ENCODE measurements at regions of chr21 and their contacts with region 1.

Region 1: GRCh38 chr21:46144464-46145070 is 10.8 kb downstream of the FTCD start:
- DNase-seq: no peak
- ATAC-seq: no peak
- H3K4me3 ChIP-seq: no peak overlapping the region
- H3K27ac ChIP-seq: no peak overlapping the region
- H3K4me1 ChIP-seq: peaks cover 5% of the 10 kb centered on the region; the same call in 1 of the 2 replicates
- H3K27me3 ChIP-seq: no peaks in the 10 kb centered on the region
- CTCF ChIP-seq: no peak

Region 2: GRCh38 chr21:45643021-45643980 is 501.3 kb before region 1 on chr21 and contains the start of gene PCBP3:
- CTCF ChIA-PET with region 1: no interaction called
- POLR2A ChIA-PET with region 1: no interaction called
- intact Hi-C with region 1: no loop called
- DNase-seq: peak; percentile 96
- ATAC-seq: peak; percentile 80
- H3K4me3 ChIP-seq: peak within 1 kb of the TSS; percentile 66
- H3K27ac ChIP-seq: no peak within 1 kb of the TSS
- H3K4me1 ChIP-seq: peaks cover 9% of the 10 kb centered on the region
- H3K27me3 ChIP-seq: no peaks in the 10 kb centered on the region
- CTCF ChIP-seq: no peak
- total RNA-seq, gene PCBP3: 2.4 and 3.0 TPM in 2 replicates

Region 3: DNA sequence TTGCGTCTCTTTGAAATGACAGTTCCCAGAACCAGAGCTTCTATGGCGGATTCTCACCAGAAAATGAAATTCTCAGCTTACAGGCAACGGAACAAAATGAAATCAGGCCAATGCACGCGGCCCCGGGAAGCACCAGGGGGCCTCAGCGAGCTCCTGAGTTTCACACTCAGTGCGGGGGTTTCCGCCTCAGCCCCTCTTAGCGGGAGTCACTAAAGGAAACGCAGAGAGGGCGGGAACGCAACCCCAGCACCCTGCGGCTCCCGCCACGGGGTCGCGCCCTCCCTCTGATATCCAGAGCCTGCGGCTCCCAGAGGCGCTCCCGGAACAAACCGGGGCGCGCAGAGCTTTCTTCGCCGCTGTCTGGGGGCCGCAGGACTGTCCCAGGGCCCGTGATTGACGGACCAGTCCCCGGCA is 170.9 kb before region 1 on chr21:
- CTCF ChIA-PET with region 1: interaction called, 22 read pairs
- POLR2A ChIA-PET with region 1: no interaction called
- intact Hi-C with region 1: loop called (anchors 5 kb)
- DNase-seq: peak; percentile 86
- ATAC-seq: peak; percentile 25
- H3K4me3 ChIP-seq: peak overlapping the region; percentile 64
- H3K27ac ChIP-seq: peak overlapping the region; percentile 93
- H3K4me1 ChIP-seq: peaks cover 34% of the 10 kb centered on the region
- H3K27me3 ChIP-seq: no peaks in the 10 kb centered on the region
- CTCF ChIP-seq: peak; percentile 88

Region 4: DNA sequence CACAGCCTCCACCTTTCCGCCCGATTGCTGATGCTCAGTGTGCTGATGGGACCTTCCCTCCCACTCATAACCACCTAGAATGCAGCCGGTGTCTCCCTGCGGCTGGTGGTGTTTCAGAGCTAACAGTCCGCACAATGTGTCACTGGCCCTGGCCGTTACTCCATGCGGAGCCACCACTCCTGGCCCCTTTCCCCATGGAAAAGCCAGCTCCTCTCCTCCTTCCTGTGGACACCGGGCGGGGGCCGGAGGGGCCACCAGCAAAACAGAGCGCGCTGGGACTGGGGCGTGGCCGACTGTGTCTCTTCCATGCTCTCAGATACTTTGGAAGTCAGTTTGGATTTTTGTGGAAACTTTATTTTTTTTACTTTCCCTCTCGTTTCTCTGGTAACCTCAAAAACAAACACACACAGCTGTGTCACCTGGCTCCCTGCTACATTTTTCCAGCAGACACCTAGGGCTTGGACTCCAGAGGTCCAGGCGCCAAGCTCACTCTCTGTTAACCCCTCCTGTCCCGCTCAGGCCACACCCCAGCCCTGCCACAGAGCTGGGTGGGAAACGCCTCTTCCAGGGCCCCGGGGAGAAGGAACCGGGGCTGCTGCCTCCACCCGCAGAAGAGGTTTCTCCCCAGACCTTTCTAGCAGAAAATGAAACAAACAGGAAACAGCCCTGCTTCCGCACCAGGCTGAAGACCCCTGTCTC is 79.2 kb before region 1 on chr21:
- CTCF ChIA-PET with region 1: no interaction called
- POLR2A ChIA-PET with region 1: no interaction called
- intact Hi-C with region 1: no loop called
- DNase-seq: peak; percentile 34
- ATAC-seq: peak; percentile 54
- H3K4me3 ChIP-seq: peak overlapping the region; percentile 25; the same call in 1 of the 2 replicates
- H3K27ac ChIP-seq: peak overlapping the region; percentile 77
- H3K4me1 ChIP-seq: peaks cover 28% of the 10 kb centered on the region
- H3K27me3 ChIP-seq: no peaks in the 10 kb centered on the region
- CTCF ChIP-seq: no peak

Region 5: GRCh38 chr21:46184625-46185555 is 40.3 kb after region 1 on chr21:
- CTCF ChIA-PET with region 1: no interaction called
- POLR2A ChIA-PET with region 1: no interaction called
- intact Hi-C with region 1: loop called (anchors 2 kb)
- DNase-seq: peak; percentile 65
- ATAC-seq: peak; percentile 75
- H3K4me3 ChIP-seq: peak overlapping the region; percentile 96
- H3K27ac ChIP-seq: peak overlapping the region; percentile 34
- H3K4me1 ChIP-seq: peaks cover 30% of the 10 kb centered on the region
- H3K27me3 ChIP-seq: no peaks in the 10 kb centered on the region
- CTCF ChIP-seq: no peak

Region 6: GRCh38 chr21:46285761-46286496 is 141.4 kb after region 1 on chr21 and contains the start of gene YBEY:
- CTCF ChIA-PET with region 1: interaction called, 3 read pairs
- POLR2A ChIA-PET with region 1: no interaction called
- intact Hi-C with region 1: loop called (anchors 5 kb)
- DNase-seq: peak; percentile 92
- ATAC-seq: peak; percentile 90
- H3K4me3 ChIP-seq: peak within 1 kb of the TSS; percentile 75
- H3K27ac ChIP-seq: peak within 1 kb of the TSS; percentile 84
- H3K4me1 ChIP-seq: peaks cover 30% of the 10 kb centered on the region
- H3K27me3 ChIP-seq: no peaks in the 10 kb centered on the region
- CTCF ChIP-seq: peak; percentile 46; the same call in 1 of the 2 replicates
- total RNA-seq, gene YBEY: 38.2 and 39.0 TPM in 2 replicates

Region 7: GRCh38 chr21:46660505-46660904 is 515.9 kb after region 1 on chr21:
- CTCF ChIA-PET with region 1: no interaction called
- POLR2A ChIA-PET with region 1: no interaction called
- intact Hi-C with region 1: no loop called
- DNase-seq: no peak
- ATAC-seq: no peak
- H3K4me3 ChIP-seq: no peak overlapping the region
- H3K27ac ChIP-seq: no peak overlapping the region
- H3K4me1 ChIP-seq: no peaks in the 10 kb centered on the region
- H3K27me3 ChIP-seq: no peaks in the 10 kb centered on the region
- CTCF ChIP-seq: no peak